ENCODE measurements at regions of chr2 and their contacts with region 1.

Region 1: GRCh38 chr2:25991965-25992364 is 9.7 kb upstream of the KIF3C start:
- DNase-seq: no peak
- H3K4me3 ChIP-seq: no peak overlapping the region
- H3K27ac ChIP-seq: no peak overlapping the region
- H3K4me1 ChIP-seq: no peaks in the 10 kb centered on the region; a peak in 1 of 4 replicates
- H3K27me3 ChIP-seq: no peaks in the 10 kb centered on the region
- CTCF ChIP-seq: no peak
- EP300 ChIP-seq: no peak
- RAD21 ChIP-seq: no peak

Region 2: DNA sequence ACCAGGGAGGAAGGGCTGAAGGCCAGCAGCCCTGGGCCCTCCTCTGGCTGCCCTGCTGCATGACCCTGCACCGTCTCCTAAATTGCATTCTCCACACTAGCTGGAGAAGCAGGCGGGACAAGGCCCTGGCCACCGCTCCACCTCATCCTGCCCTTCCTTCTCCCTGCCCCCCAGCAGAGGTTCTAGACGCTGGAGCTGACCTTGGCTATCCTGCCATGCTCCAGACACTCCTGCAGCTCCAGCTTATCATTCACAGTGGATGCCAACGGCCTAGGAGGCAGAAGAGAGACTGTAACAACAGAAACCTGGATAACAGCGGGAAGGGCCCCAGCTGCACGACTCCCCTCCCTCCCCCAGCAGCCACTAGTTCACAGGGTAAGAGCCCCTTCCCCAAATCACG is 755.2 kb before region 1 on chr2:
- CTCF ChIA-PET with region 1: no interaction called
- POLR2A ChIA-PET with region 1: no interaction called
- DNase-seq: no peak
- H3K4me3 ChIP-seq: no peak overlapping the region
- H3K27ac ChIP-seq: no peak overlapping the region; a peak in 1 of 4 replicates
- H3K4me1 ChIP-seq: peaks cover 0 to 4% of the 10 kb centered on the region in 2 experiments; a peak in 1 of 4 replicates
- H3K27me3 ChIP-seq: no peaks in the 10 kb centered on the region
- CTCF ChIP-seq: no peak
- EP300 ChIP-seq: no peak
- RAD21 ChIP-seq: no peak

Region 3: DNA sequence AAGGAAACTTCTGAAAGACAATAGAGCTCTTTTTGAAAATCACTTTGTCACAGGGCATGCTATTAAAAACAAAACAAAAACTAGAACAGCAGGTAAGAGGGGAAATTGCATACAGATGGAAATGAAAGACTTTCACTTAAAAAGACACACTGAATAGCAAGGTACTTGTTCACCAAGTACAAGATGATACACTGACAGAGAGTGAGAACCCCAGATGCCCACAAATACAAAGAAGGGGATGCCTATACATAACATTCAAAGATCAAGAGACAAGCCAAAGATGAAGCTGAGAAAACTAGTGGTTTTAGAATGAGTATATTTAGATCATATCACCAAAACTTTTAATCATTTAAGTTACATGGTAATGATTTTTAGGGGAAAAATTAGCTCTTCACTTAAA is 174.3 kb before region 1 on chr2:
- CTCF ChIA-PET with region 1: no interaction called
- POLR2A ChIA-PET with region 1: no interaction called
- DNase-seq: no peak
- H3K4me3 ChIP-seq: no peak overlapping the region
- H3K27ac ChIP-seq: no peak overlapping the region
- H3K4me1 ChIP-seq: no peaks in the 10 kb centered on the region
- H3K27me3 ChIP-seq: no peaks in the 10 kb centered on the region
- CTCF ChIP-seq: no peak
- EP300 ChIP-seq: no peak
- RAD21 ChIP-seq: no peak

Region 4: DNA sequence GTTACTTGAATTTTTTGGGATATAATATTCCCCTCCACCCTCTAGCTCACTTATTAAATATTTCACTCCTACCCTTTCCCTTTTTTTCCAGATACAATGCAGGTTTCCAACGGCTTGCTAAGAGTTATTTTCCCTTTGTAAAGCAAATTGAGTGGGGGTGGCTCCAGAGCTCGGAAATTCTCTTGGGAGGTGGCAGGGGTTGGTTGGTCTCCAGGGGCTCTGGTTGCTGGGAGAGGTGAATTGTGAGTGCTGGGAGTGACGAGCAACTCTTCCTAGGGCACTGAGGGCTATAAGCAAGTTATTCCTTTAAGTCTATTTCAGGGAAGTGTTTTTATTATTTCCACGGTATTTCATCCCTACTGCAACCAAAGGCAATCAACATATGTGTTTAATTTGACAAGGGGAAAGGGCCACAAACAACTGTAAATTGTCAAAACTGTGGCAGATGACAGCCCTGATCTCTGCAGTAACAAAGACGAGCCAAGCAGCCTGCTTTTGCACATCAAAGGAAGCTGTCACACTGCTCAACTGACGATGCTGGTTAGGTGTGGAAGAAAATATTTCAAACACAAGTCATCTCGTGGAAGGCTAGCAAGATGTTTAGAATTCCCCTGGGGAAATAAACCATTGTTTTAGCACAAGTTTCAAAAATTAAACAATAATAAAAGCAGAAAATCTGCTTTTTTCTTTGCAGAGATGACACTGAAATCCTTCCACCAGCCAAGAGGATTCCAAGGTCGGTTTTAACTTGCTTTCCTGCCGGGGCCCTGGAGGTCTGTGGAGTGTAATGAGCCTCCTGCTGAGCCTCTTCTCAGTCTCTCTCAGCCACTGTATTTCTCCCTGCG is 78.9 kb before region 1 on chr2:
- CTCF ChIA-PET with region 1: no interaction called
- POLR2A ChIA-PET with region 1: no interaction called
- DNase-seq: peak; percentile 72
- H3K4me3 ChIP-seq: no peak overlapping the region
- H3K27ac ChIP-seq: peak overlapping the region in 1 of 2 experiments; percentile 29; a peak in 1 of 4 replicates
- H3K4me1 ChIP-seq: peaks cover 7 to 11% of the 10 kb centered on the region in 2 experiments; a peak in 2 of 4 replicates
- H3K27me3 ChIP-seq: no peaks in the 10 kb centered on the region
- CTCF ChIP-seq: no peak
- EP300 ChIP-seq: no peak
- RAD21 ChIP-seq: 0 out of 2 replicates have a peak, but pooled peaks have one; percentile 1

Region 5: DNA sequence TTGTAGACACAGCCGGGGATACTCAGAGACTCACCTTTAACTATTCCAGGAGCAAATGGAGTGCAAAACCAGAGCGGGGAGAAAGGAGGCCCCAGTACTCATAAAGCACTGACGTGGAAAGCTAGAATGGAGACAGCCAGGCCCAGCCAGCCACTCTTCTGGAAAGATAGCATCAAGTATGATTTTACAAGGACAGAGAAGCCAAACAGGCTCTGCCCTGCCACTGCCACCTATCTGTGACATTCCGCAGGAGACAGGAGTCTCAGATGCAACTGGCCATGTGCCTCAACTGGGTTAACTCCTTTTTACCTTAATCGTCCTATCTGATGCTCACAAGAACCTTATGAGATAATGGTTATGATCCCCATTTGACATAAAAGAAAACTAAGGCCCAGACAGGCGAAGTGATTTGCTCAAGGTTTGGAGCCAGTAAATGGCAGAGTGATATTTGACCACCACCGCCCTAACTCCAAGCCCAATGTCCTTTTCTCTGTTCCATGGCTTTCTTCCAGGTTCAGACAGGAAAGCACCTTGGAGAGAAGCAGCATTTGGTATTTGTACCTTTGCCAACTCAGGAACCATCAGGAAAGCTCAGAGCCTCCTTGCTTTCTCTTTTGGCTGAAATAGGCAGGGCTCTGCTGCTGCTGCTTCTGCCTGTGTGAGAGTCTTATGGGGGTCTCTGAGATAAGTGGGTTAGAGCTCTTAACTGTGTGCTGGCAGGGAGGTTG is 25.3 kb before region 1 on chr2:
- CTCF ChIA-PET with region 1: interaction called, 12 read pairs
- POLR2A ChIA-PET with region 1: no interaction called
- DNase-seq: peak; percentile 65
- H3K4me3 ChIP-seq: no peak overlapping the region
- H3K27ac ChIP-seq: peak overlapping the region in 1 of 2 experiments; percentile 16; a peak in 1 of 4 replicates
- H3K4me1 ChIP-seq: peaks cover 20 to 35% of the 10 kb centered on the region in 2 experiments; a peak in 3 of 4 replicates
- H3K27me3 ChIP-seq: no peaks in the 10 kb centered on the region
- CTCF ChIP-seq: no peak
- EP300 ChIP-seq: peak in 1 of 2 experiments; percentile 55; a peak in 2 of 4 replicates
- RAD21 ChIP-seq: peak; percentile 37; the same call in 1 of the 2 replicates

Region 6: GRCh38 chr2:26018176-26018716 is 26.3 kb after region 1 on chr2:
- CTCF ChIA-PET with region 1: interaction called, 10 read pairs
- POLR2A ChIA-PET with region 1: no interaction called
- DNase-seq: peak; percentile 52
- H3K4me3 ChIP-seq: no peak overlapping the region
- H3K27ac ChIP-seq: peak overlapping the region; percentile 11 to 70; a peak in 3 of 4 replicates
- H3K4me1 ChIP-seq: peaks cover 7 to 15% of the 10 kb centered on the region in 2 experiments; a peak in 3 of 4 replicates
- H3K27me3 ChIP-seq: no peaks in the 10 kb centered on the region
- CTCF ChIP-seq: no peak
- EP300 ChIP-seq: no peak; a peak in 1 of 4 replicates
- RAD21 ChIP-seq: no peak

Region 7: GRCh38 chr2:26033818-26034636 is 42.1 kb after region 1 on chr2 and contains the start of gene RAB10:
- CTCF ChIA-PET with region 1: interaction called, 21 read pairs
- POLR2A ChIA-PET with region 1: interaction called, 4 read pairs
- DNase-seq: peak; percentile 99
- H3K4me3 ChIP-seq: peak within 1 kb of the TSS; percentile 82 to 90
- H3K27ac ChIP-seq: peak within 1 kb of the TSS; percentile 91 to 94
- H3K4me1 ChIP-seq: peaks cover 4 to 11% of the 10 kb centered on the region in 2 experiments; a peak in 3 of 4 replicates
- H3K27me3 ChIP-seq: no peaks in the 10 kb centered on the region
- CTCF ChIP-seq: no peak
- EP300 ChIP-seq: 0 out of 4 replicates have a peak, but pooled peaks of 1 of the 2 experiments have one; percentile 7
- RAD21 ChIP-seq: 0 out of 2 replicates have a peak, but pooled peaks have one; percentile 7
- polyA plus RNA-seq, gene RAB10: 47.5 and 57.5 TPM in 2 replicates

Measured in SK-N-SH (cell line).